ENCODE measurements at regions of chr6 and their contacts with region 1.

Region 1: DNA sequence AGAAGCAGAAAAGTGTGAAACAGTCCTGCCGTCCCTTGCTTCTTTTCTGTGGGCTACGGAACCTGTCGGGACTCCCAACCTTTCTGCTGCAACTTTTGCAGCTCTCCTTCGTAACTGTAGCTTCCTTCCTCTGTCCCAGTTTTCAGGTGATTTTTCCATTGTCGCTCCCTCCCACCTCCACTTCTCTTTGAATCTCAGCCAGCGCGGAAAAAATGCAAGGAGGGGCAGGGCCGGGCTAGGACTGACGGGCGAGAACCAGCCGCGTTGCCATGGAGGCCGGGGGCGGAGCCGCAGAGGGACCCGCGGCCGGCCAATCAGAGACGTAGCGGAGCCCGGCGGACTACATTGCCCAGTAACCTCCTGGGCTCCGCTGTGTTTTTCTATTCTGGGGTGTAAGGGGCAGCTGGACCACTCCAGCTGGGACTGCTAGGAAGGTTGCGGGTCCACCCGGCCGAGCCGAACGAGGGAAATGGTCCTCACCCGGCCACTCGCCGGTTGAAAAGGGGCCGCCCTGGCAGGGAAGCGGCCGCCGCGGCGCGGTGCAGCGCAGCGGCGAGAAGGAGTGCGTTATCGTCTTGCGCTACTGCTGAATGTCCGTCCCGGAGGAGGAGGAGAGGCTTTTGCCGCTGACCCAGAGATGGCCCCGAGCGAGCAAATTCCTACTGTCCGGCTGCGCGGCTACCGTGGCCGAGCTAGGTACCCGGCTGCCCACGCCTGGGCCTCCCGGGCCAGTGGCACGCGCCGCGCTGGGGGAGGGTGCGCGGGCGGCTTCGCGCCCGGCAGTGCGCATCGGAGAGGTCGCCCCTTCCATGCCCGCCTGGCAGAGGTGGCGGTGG is at the starts of genes CYP39A1 and SLC25A27:
- DNase-seq: peak; percentile 89
- H3K4me3 ChIP-seq: peak within 1 kb of the TSS; percentile 47 to 84 (median 65)
- H3K27ac ChIP-seq: no peak within 1 kb of the TSS
- H3K4me1 ChIP-seq: peaks cover 5% of the 10 kb centered on the region
- H3K27me3 ChIP-seq: peaks cover 0 to 4% of the 10 kb centered on the region in 2 experiments
- CTCF ChIP-seq: no peak
- POLR2A ChIP-seq: no peak
- total RNA-seq, gene CYP39A1: not detected in 2 replicates
- total RNA-seq, gene SLC25A27: 3.4 and 4.0 TPM in 2 replicates

Region 2: GRCh38 chr6:46129629-46130511 is 523.0 kb before region 1 on chr6 and contains the start of gene ENPP4:
- CTCF ChIA-PET with region 1: no interaction called
- POLR2A ChIA-PET with region 1: no interaction called
- dilution Hi-C with region 1: no loop called
- intact Hi-C with region 1: loop called (anchors 5 kb)
- DNase-seq: peak; percentile 98
- H3K4me3 ChIP-seq: peak within 1 kb of the TSS; percentile 59 to 92 (median 75)
- H3K27ac ChIP-seq: no peak within 1 kb of the TSS
- H3K4me1 ChIP-seq: peaks cover 12% of the 10 kb centered on the region
- H3K27me3 ChIP-seq: peaks cover 10 to 19% of the 10 kb centered on the region in 2 experiments
- CTCF ChIP-seq: no peak
- POLR2A ChIP-seq: no peak
- total RNA-seq, gene ENPP4: 3.9 and 4.5 TPM in 2 replicates

Region 3: GRCh38 chr6:46453221-46453620 is 199.6 kb before region 1 on chr6:
- CTCF ChIA-PET with region 1: no interaction called
- POLR2A ChIA-PET with region 1: no interaction called
- dilution Hi-C with region 1: no loop called
- intact Hi-C with region 1: no loop called
- DNase-seq: no peak
- H3K4me3 ChIP-seq: no peak overlapping the region
- H3K27ac ChIP-seq: no peak overlapping the region
- H3K4me1 ChIP-seq: no peaks in the 10 kb centered on the region
- H3K27me3 ChIP-seq: peaks cover 0 to 4% of the 10 kb centered on the region in 2 experiments
- CTCF ChIP-seq: no peak
- POLR2A ChIP-seq: no peak